Activated T-helper 1 cell treated with anti-CD3 and anti-CD28 coated beads, Interleukin-12 subunit alpha, Interleukin-12 subunit beta, Interleukin-2, Interleukin-4 antibody, amounts not matched to agents 30 ng/mL and 10 ng/mL and 1 ng/mL, durations not matched to agents 14 hours and 24 hours and 36 hours (primary cell): ENCODE measurements at regions of chr2 and their contacts with region 1.

Region 1: DNA sequence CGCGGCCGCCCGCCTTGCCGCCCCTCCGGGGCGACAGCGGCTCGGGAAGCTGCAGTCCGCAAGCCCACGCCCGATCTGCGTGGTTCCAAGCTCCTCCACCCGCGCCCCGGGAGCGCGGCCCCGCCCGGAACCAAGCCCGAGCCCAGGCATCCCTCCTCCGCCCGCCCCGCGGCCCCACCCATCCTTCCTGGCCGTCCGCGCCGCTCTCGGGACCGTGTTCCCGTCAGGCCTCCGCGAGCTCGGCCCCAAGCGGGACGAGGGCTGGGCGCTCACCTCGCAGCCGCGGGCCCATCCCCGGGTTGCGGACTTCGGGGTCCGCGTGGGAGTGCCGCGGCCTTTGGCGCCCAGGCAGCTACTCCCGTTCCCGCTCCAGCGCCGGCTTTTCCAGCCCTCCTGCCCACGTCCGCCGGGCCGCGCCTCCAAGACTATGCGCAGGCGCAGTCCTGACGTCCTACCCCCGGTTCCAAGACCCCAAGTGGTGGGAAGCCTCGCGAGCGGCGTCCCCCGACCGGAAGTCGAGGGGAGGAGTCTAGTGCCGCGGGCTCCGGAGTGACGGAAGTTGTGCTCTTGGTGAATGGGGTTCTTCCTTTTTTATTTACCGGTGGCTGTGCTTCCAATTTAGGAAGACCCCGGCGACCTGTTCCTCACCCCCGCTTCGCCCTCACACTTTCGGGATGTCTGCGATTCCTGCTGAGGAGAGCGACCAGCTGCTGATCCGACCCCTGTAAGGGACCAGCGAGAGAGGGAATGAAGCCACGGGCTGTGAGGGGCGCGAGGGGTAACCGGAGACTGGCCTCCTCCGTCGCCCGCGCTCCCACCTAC is at the starts of genes CPSF3 and ITGB1BP1:
- DNase-seq: peak; percentile 96
- H3K4me3 Mint-ChIP-seq: peak within 1 kb of the TSS; percentile 92
- H3K27ac Mint-ChIP-seq: peak within 1 kb of the TSS; percentile 92
- H3K4me1 Mint-ChIP-seq: peaks cover 39% of the 10 kb centered on the region
- H3K27me3 Mint-ChIP-seq: no peaks in the 10 kb centered on the region
- total RNA-seq, gene CPSF3: 74.3 and 74.7 TPM in 2 replicates
- total RNA-seq, gene ITGB1BP1: 115 and 119 TPM in 2 replicates

Region 2: DNA sequence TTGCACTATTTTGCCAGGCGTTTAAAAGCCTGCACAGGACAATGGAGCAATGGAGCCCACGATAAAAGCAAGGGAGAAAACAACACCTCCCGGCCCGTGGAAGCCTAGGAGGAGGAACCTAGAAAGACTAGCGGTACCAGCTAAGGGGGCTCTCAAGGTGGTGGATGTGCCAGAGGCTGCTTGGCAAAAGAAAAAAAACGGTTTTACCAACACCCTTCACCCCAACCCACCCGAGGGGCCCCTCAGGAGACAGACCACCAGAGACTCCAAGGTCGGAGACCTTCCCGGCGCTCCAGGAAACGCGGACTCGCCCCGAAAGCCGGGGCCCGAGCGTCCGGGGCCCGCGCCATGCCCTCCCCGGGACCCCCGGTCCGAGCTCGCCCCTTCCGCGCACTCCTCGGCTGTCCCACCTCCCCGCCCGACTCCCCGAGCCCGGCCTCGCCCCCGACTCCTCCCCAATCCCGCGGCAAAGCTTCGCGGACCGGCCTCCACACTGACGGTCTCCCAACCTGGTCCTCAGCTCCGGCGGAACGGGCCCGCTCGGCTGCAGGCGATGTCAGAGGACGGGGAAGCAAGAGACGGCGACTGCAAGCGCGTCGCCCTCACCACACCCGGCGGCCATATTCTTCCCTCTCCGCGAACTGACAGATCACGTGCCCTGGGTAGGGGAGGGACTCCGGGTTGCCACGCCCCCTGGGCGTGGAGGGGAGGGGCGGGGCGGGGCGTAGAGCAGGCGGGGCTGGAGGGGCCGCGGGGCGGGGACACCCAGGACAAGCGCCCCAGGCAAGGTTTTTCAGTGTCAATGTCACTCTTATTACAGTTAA is 586.1 kb before region 1 on chr2 and contains the start of gene KIDINS220:
- intact Hi-C with region 1: loop called (anchors 1 kb)
- DNase-seq: peak; percentile 72
- H3K4me3 Mint-ChIP-seq: peak within 1 kb of the TSS; percentile 100
- H3K27ac Mint-ChIP-seq: peak within 1 kb of the TSS; percentile 96
- H3K4me1 Mint-ChIP-seq: peaks cover 31% of the 10 kb centered on the region
- H3K27me3 Mint-ChIP-seq: no peaks in the 10 kb centered on the region
- total RNA-seq, gene KIDINS220: 24.3 and 24.5 TPM in 2 replicates

Region 3: GRCh38 chr2:8885449-8886201 is 537.7 kb before region 1 on chr2:
- intact Hi-C with region 1: no loop called
- DNase-seq: no peak
- H3K4me3 Mint-ChIP-seq: no peak overlapping the region
- H3K27ac Mint-ChIP-seq: no peak overlapping the region
- H3K4me1 Mint-ChIP-seq: no peaks in the 10 kb centered on the region
- H3K27me3 Mint-ChIP-seq: peaks cover 3% of the 10 kb centered on the region

Region 4: GRCh38 chr2:9205963-9206948 is 217.1 kb before region 1 on chr2 and contains the start of gene ASAP2:
- intact Hi-C with region 1: loop called (anchors 2 kb)
- DNase-seq: peak; percentile 34
- H3K4me3 Mint-ChIP-seq: peak within 1 kb of the TSS; percentile 67
- H3K27ac Mint-ChIP-seq: no peak within 1 kb of the TSS
- H3K4me1 Mint-ChIP-seq: peaks cover 5% of the 10 kb centered on the region
- H3K27me3 Mint-ChIP-seq: peaks cover 53% of the 10 kb centered on the region
- total RNA-seq, gene ASAP2: 0.34 and 1.2 TPM in 2 replicates

Region 5: GRCh38 chr2:9630749-9631483 is 207.6 kb after region 1 on chr2 and contains the start of gene YWHAQ:
- intact Hi-C with region 1: loop called (anchors 1 kb)
- DNase-seq: peak; percentile 97
- H3K4me3 Mint-ChIP-seq: peak within 1 kb of the TSS; percentile 97
- H3K27ac Mint-ChIP-seq: peak within 1 kb of the TSS; percentile 93
- H3K4me1 Mint-ChIP-seq: peaks cover 45% of the 10 kb centered on the region
- H3K27me3 Mint-ChIP-seq: peaks cover 9% of the 10 kb centered on the region
- total RNA-seq, gene YWHAQ: 290 and 311 TPM in 2 replicates

Region 6: DNA sequence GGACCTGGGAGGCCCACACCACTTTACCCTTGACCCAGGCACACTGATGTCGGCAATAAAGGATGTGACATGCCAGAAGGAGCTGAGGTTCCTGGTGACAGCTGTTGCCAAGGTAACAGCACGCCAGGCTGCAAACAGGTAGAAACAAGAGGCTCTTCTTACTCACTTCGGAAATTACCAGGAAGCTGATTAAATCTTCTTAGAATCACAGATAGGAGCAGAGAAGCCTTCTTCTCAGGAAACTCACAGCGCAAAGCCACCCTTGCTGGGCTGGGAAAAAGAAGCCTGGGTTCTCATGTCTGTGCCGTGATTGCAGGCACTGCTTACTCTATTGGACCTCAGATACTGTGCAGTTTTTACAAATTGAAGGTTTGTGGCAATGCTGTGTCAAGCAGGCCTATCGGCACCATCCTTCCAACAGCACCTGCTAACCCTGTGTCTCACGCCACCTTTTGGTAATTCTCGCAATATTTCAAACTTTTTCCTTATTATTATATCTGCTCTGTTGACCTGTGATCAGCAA is 358.9 kb after region 1 on chr2:
- intact Hi-C with region 1: loop called (anchors 2 kb)
- DNase-seq: peak; percentile 76
- H3K4me3 Mint-ChIP-seq: peak overlapping the region; percentile 66
- H3K27ac Mint-ChIP-seq: peak overlapping the region; percentile 84
- H3K4me1 Mint-ChIP-seq: peaks cover 66% of the 10 kb centered on the region
- H3K27me3 Mint-ChIP-seq: no peaks in the 10 kb centered on the region

Region 7: DNA sequence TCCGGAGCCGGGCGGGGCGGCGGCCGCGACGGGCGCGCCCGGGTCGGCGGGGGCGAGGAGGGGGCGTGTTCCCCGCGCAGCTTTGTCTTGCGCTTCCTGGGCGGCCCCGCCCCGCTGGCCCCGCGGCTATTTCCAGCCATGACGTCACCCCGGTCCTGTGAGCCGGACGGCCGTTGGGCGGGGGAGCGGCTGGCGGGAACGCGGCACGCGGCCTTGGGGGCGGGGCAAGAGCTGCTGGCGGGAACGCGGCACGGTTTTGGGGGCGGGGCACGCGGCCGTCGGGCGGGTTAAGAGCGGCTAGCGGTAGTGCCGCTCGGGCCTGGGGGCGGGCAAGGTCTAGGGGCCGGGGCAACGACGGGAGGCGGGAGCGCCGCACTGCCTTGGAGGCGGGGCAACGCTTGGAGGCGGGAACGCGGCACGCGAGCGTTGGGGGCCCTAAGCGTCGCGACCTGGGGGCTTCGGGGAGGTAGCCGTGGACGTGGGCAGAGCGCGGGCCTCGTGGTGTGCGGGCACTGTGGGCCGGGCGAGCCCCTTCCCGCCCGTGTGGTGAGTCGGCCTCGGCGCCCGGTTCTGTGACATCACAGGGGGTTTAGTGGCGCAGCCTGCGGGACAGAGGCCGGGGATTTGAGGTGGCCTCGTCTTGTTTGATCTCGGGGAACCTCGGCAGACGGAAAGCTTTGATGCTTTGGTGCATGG is 620.7 kb after region 1 on chr2:
- intact Hi-C with region 1: loop called (anchors 5 kb)
- DNase-seq: peak; percentile 86
- H3K4me3 Mint-ChIP-seq: peak overlapping the region; percentile 77
- H3K27ac Mint-ChIP-seq: peak overlapping the region; percentile 66
- H3K4me1 Mint-ChIP-seq: peaks cover 14% of the 10 kb centered on the region
- H3K27me3 Mint-ChIP-seq: peaks cover 22% of the 10 kb centered on the region

Region 8: DNA sequence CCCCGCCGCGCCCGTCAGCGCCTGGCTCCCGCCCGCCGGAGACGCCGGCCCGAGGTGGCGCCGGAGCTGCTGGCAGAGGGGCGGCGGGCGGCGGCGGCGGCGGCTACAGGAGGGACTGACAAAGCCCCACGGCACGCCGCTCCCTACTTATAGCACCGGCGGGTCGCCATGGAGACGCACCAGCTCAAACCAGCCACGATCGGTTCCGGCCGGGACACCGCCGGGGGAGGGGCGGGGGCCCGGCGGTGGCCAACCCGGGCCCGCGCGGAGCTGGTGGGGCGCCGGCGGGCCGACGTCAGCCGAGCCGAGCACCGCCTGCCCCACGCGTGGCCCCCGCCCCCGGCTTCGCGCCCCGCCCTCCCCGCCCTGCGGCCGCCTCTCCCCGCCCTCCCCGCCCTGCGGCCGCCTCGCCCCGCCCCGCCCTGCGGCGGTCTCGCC is 1024.9 kb after region 1 on chr2 and contains the start of gene ODC1:
- intact Hi-C with region 1: loop called (anchors 1 kb)
- DNase-seq: peak; percentile 90
- H3K4me3 Mint-ChIP-seq: peak within 1 kb of the TSS; percentile 100
- H3K27ac Mint-ChIP-seq: peak within 1 kb of the TSS; percentile 98
- H3K4me1 Mint-ChIP-seq: peaks cover 45% of the 10 kb centered on the region
- H3K27me3 Mint-ChIP-seq: peaks cover 1% of the 10 kb centered on the region
- total RNA-seq, gene ODC1: 235 and 247 TPM in 2 replicates